Heart right ventricle (tissue), 16 donors: ENCODE measurements at regions of chr11 and their contacts with region 1.

Region 1: GRCh38 chr11:74520927-74521665 is 27.6 kb upstream of the LIPT2 start:
- DNase-seq: no peak
- ATAC-seq: peak in 5 of 8 donors; percentile 25 to 75 (median 35)
- H3K4me3 ChIP-seq: no peak overlapping the region
- H3K27ac ChIP-seq: peak overlapping the region in 2 of 10 donors; percentile 38 to 62
- H3K4me1 ChIP-seq: peaks cover 0 to 23% (median 0%) of the 10 kb centered on the region in 9 donors
- H3K27me3 ChIP-seq: no peaks in the 10 kb centered on the region
- CTCF ChIP-seq: no peak

Region 2: GRCh38 chr11:74094400-74094799 is 426.7 kb before region 1 on chr11:
- intact Hi-C with region 1: no loop called
- DNase-seq: no peak
- ATAC-seq: no peak
- H3K4me3 ChIP-seq: no peak overlapping the region
- H3K27ac ChIP-seq: no peak overlapping the region
- H3K4me1 ChIP-seq: no peaks in the 10 kb centered on the region
- H3K27me3 ChIP-seq: no peaks in the 10 kb centered on the region
- CTCF ChIP-seq: no peak

Region 3: DNA sequence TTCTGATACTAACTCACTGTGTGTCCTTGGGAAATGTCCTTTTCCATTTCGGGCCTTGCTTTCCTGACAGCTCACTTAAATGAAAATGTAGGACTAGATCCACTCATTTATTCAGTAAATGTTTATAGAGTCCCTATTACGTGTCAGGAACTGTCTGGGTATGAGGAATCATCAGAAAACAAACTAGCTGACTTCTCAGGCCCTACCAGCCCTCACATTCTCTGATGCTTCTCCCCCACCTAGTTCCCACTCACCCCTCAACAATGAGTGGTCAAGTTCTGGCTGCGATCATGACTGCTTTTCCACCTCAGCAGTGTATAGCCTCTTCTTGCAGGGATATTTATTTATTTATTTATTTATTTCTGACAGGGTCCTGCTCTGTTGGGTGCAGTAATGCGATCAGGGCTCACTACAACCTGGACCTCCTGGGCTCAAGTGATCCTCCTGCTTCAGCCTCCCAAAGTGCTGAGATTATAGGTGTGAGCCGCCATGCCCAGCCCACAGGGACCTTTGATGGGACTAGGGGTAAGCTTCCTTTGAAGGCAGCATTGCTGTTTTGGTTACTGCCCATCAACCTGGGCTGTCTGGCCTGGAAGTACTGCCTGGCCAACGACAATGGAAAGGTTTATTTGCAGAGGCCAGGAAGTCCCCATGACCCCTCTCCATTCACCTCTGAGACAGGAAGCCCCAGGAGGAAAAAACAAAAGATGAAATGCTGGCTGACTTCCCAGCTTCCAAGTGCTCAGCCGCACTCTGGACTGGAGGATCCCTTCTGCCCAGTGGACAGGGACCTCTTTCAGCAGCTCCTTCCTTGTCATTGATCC is 38.2 kb after region 1 on chr11:
- intact Hi-C with region 1: loop called in 1 of 10 experiments (anchors 5 kb)
- DNase-seq: peak in 1 of 2 donors; percentile 40
- ATAC-seq: peak; percentile 45 to 92 (median 78)
- H3K4me3 ChIP-seq: no peak overlapping the region
- H3K27ac ChIP-seq: peak overlapping the region in 6 of 10 donors; percentile 3 to 62 (median 56)
- H3K4me1 ChIP-seq: peaks cover 0 to 16% (median 0%) of the 10 kb centered on the region in 9 donors
- H3K27me3 ChIP-seq: no peaks in the 10 kb centered on the region
- CTCF ChIP-seq: no peak